HCT116 (cell line): ENCODE measurements at regions of chr3 and their contacts with region 1.

Region 1: GRCh38 chr3:129627429-129628168 is 21.1 kb upstream of the PLXND1 start:
- DNase-seq: peak; percentile 61
- ATAC-seq: peak; percentile 47
- H3K4me3 ChIP-seq: peak overlapping the region; percentile 87 to 97
- H3K27ac ChIP-seq: peak overlapping the region; percentile 97
- H3K4me1 ChIP-seq: peaks cover 15 to 24% of the 10 kb centered on the region in 2 experiments
- H3K27me3 ChIP-seq: no peaks in the 10 kb centered on the region
- CTCF ChIP-seq: peak in 2 of 3 experiments; percentile 90 to 94; a peak in 4 of 6 replicates
- POLR2A ChIP-seq: no peak
- RAD21 ChIP-seq: no peak

Region 2: GRCh38 chr3:129490242-129491045 is 137.2 kb before region 1 on chr3:
- CTCF ChIA-PET with region 1: interaction called, 33 read pairs
- POLR2A ChIA-PET with region 1: no interaction called
- RAD21 ChIA-PET with region 1: interaction called, 5 to 11 read pairs
- intact Hi-C with region 1: loop called (anchors 1 kb)
- DNase-seq: peak; percentile 49
- ATAC-seq: peak; percentile 92
- H3K4me3 ChIP-seq: no peak overlapping the region
- H3K27ac ChIP-seq: no peak overlapping the region
- H3K4me1 ChIP-seq: peaks cover 5 to 21% of the 10 kb centered on the region in 2 experiments
- H3K27me3 ChIP-seq: no peaks in the 10 kb centered on the region
- CTCF ChIP-seq: peak; percentile 84 to 87 (median 86)
- POLR2A ChIP-seq: no peak
- RAD21 ChIP-seq: peak; percentile 95

Region 3: GRCh38 chr3:129831503-129831902 is 203.9 kb after region 1 on chr3:
- CTCF ChIA-PET with region 1: interaction called, 16 read pairs
- POLR2A ChIA-PET with region 1: no interaction called
- RAD21 ChIA-PET with region 1: interaction called in 1 of 2 experiments, 3 read pairs
- intact Hi-C with region 1: no loop called
- DNase-seq: no peak
- ATAC-seq: no peak
- H3K4me3 ChIP-seq: peak overlapping the region in 1 of 2 experiments; percentile 34; a peak in 2 of 4 replicates
- H3K27ac ChIP-seq: no peak overlapping the region
- H3K4me1 ChIP-seq: peaks cover 18 to 35% of the 10 kb centered on the region in 2 experiments
- H3K27me3 ChIP-seq: no peaks in the 10 kb centered on the region
- CTCF ChIP-seq: no peak
- POLR2A ChIP-seq: no peak
- RAD21 ChIP-seq: no peak

Region 4: DNA sequence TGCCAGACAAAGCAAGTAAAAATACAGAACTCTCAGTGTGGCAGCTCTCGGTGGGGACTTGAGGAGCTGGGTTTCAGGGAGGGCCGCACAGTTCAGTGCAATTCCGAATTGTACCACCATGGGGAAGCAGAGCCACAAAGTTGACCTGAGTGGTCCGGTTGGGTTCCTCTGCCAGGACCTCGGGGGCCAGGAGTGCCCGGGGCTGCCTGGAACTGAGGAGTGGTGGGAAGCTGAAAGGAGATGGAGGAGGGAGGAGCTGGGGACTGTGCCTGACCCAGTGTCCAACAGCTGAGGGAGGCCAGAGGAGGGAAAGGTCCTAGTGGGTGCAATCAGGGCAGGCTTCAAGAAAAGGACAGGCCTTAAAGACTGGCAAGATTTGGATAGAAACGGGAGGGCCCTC is 314.7 kb after region 1 on chr3:
- CTCF ChIA-PET with region 1: interaction called, 12 read pairs
- POLR2A ChIA-PET with region 1: no interaction called
- RAD21 ChIA-PET with region 1: no interaction called
- intact Hi-C with region 1: no loop called
- DNase-seq: peak; percentile 65
- ATAC-seq: peak; percentile 97
- H3K4me3 ChIP-seq: no peak overlapping the region
- H3K27ac ChIP-seq: no peak overlapping the region
- H3K4me1 ChIP-seq: peaks cover 0 to 3% of the 10 kb centered on the region in 2 experiments; a peak in 1 of 4 replicates
- H3K27me3 ChIP-seq: no peaks in the 10 kb centered on the region
- CTCF ChIP-seq: peak; percentile 76 to 98 (median 87)
- POLR2A ChIP-seq: no peak
- RAD21 ChIP-seq: peak; percentile 99